HepG2 (cell line): ENCODE measurements at regions of chr19 and their contacts with region 1.

Region 1: GRCh38 chr19:50258918-50259372 is 55.5 kb downstream of the MYH14 start:
- DNase-seq: no peak
- ATAC-seq: peak; percentile 63; the same call in 2 of the 3 replicates
- H3K4me3 ChIP-seq: no peak overlapping the region
- H3K27ac ChIP-seq: no peak overlapping the region
- H3K4me1 ChIP-seq: no peaks in the 10 kb centered on the region
- H3K27me3 ChIP-seq: no peaks in the 10 kb centered on the region
- CTCF ChIP-seq: peak; percentile 86
- EP300 ChIP-seq: no peak
- POLR2A ChIP-seq: no peak
- RAD21 ChIP-seq: peak; percentile 86

Region 2: DNA sequence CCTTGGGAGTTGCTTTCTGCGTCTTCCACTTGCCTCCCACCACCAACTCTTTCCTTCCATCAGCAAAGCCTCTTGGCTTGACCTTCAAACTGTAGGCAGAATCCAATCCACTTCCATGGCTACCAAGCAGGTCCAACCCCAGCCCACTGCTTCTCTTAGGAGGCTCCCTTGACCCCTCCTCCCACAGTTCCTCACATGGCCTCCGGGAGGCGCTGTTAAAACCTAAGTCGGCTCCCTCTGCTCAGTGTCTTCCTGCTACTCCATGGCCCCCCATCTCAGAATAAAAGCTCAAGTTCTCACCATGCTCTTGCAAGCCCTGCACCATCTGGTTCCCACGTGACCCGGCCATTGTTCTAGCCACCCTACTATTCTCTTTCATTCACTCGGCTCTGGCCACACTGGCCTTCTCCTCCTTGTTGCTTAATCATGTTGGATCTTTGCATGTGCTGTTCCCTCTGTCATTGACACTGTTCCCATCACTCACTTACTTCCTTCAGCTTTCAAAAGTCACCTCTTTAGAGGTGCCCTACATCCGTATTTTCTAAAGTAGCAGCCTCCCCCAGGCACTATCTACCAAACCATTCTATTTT is 103.3 kb before region 1 on chr19:
- CTCF ChIA-PET with region 1: no interaction called
- POLR2A ChIA-PET with region 1: no interaction called
- in situ Hi-C with region 1: loop called (anchors 5 kb)
- intact Hi-C with region 1: no loop called
- DNase-seq: no peak
- ATAC-seq: no peak
- H3K4me3 ChIP-seq: no peak overlapping the region
- H3K27ac ChIP-seq: no peak overlapping the region
- H3K4me1 ChIP-seq: no peaks in the 10 kb centered on the region
- H3K27me3 ChIP-seq: peaks cover 0 to 8% of the 10 kb centered on the region in 2 experiments; a peak in 2 of 5 replicates
- CTCF ChIP-seq: no peak
- EP300 ChIP-seq: no peak
- POLR2A ChIP-seq: no peak
- RAD21 ChIP-seq: no peak

Region 3: DNA sequence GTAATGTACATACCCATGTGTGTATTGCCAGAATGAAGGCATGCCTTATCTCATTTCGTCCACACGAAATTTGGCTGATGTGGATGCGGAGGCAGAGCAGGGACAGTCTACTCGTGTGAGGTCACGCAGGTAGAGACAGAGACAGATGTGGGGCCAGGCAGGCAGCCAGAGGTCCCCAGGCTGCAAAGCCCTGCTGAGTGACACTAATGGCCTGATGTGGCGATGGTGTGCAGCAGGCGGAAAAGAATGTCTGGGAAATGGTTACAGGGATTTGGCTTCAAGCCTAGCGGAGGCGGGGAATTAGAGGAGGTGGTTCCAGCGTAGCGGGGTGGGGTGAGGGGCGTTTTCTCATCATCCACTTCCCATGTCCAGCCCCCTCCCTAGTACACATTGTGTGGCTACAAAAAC is 91.6 kb before region 1 on chr19:
- CTCF ChIA-PET with region 1: interaction called, 13 read pairs
- POLR2A ChIA-PET with region 1: no interaction called
- in situ Hi-C with region 1: no loop called
- intact Hi-C with region 1: no loop called
- DNase-seq: peak; percentile 15
- ATAC-seq: peak; percentile 51; the same call in 2 of the 3 replicates
- H3K4me3 ChIP-seq: no peak overlapping the region
- H3K27ac ChIP-seq: no peak overlapping the region
- H3K4me1 ChIP-seq: no peaks in the 10 kb centered on the region
- H3K27me3 ChIP-seq: 0 out of 5 replicates have a peak, but pooled peaks cover 0 to under 1% of the 10 kb centered on the region in 2 experiments
- CTCF ChIP-seq: no peak
- EP300 ChIP-seq: no peak
- POLR2A ChIP-seq: no peak
- RAD21 ChIP-seq: no peak

Region 4: GRCh38 chr19:50190439-50190891 is 68.5 kb before region 1 on chr19:
- CTCF ChIA-PET with region 1: no interaction called
- POLR2A ChIA-PET with region 1: no interaction called
- in situ Hi-C with region 1: no loop called
- intact Hi-C with region 1: no loop called
- DNase-seq: no peak
- ATAC-seq: no peak
- H3K4me3 ChIP-seq: no peak overlapping the region
- H3K27ac ChIP-seq: no peak overlapping the region
- H3K4me1 ChIP-seq: no peaks in the 10 kb centered on the region; the same call in 1 of the 2 replicates
- H3K27me3 ChIP-seq: peaks cover 0 to 13% of the 10 kb centered on the region in 2 experiments; a peak in 2 of 5 replicates
- CTCF ChIP-seq: no peak
- EP300 ChIP-seq: no peak
- POLR2A ChIP-seq: no peak
- RAD21 ChIP-seq: no peak